Activated B cell treated with CpG ODN at 0.5 μM for 24 hours (primary cell): ENCODE measurements at regions of chr4 and their contacts with region 1.

Region 1: GRCh38 chr4:111136438-111136837 is 513.6 kb upstream of the PITX2 start:
- DNase-seq: no peak
- ATAC-seq: no peak
- H3K4me3 Mint-ChIP-seq: no peak overlapping the region
- H3K27ac Mint-ChIP-seq: no peak overlapping the region
- H3K4me1 Mint-ChIP-seq: no peaks in the 10 kb centered on the region
- H3K27me3 Mint-ChIP-seq: no peaks in the 10 kb centered on the region
- CTCF ChIP-seq: no peak

Region 2: GRCh38 chr4:111154934-111155333 is 18.5 kb after region 1 on chr4:
- CTCF ChIA-PET with region 1: no interaction called
- POLR2A ChIA-PET with region 1: no interaction called
- intact Hi-C with region 1: loop called (anchors 1 kb)
- DNase-seq: no peak
- ATAC-seq: no peak
- H3K4me3 Mint-ChIP-seq: no peak overlapping the region
- H3K27ac Mint-ChIP-seq: no peak overlapping the region
- H3K4me1 Mint-ChIP-seq: no peaks in the 10 kb centered on the region
- H3K27me3 Mint-ChIP-seq: no peaks in the 10 kb centered on the region
- CTCF ChIP-seq: no peak